GM12878 (cell line): ENCODE measurements at regions of chr4 and their contacts with region 1.

Region 1: GRCh38 chr4:81003597-81004111 is 26.9 kb upstream of the BMP3 start:
- DNase-seq: peak; percentile 75
- ATAC-seq: peak; percentile 98
- H3K4me3 ChIP-seq: no peak overlapping the region
- H3K27ac ChIP-seq: no peak overlapping the region
- H3K4me1 ChIP-seq: peaks cover 6% of the 10 kb centered on the region; the same call in 1 of the 2 replicates
- H3K27me3 ChIP-seq: no peaks in the 10 kb centered on the region
- CTCF ChIP-seq: no peak
- EP300 ChIP-seq: peak; percentile 87 to 96
- POLR2A ChIP-seq: no peak
- RAD21 ChIP-seq: no peak

Region 2: DNA sequence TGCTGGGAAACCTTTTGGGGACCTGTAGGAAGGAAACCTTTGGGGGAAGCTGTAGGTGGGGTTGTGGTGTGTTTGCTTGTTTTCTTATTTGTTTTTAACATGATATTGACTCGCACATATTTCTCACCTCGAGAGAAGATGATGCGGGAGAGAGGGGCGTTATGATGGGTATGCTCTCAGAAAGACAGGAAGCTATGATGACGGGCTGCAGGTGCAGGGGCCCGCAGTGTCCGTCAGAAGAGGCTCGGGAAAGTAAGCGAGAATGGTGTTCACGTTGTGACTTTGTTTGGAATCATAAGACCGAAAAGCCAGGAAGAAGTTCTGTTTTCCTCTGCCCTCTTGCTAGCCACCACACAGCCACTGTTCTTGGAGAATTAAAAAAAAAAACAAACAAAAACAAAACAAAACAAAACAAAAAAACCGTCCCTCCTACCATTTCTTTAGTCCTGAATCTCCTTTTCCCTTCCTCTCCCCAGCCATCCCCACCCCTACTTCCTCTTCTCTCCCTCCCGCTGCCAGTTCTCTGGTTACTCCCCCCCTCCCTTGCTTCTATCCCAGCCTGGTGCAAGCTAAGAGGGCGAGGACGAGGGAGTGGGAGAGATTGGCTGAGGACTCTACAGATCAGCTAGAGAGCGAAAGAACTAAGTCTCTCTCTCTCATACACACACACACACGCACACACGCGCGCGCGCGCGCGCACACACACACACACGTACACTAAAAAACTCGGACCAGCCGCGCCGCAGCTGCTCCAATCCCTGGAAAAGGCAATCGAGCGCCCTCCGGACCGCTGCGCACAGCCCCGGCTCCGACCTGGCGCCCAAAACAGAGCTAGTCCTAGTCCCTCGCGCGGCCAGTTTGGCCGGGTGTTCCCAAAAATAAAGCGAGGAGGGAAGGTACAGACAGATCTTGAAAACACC is 26.7 kb after region 1 on chr4 and contains the start of gene BMP3:
- CTCF ChIA-PET with region 1: interaction called, 4 read pairs
- POLR2A ChIA-PET with region 1: no interaction called
- RAD21 ChIA-PET with region 1: interaction called, 3 read pairs
- SMC1A ChIA-PET with region 1: interaction called, 13 read pairs
- in situ Hi-C with region 1: no loop called
- intact Hi-C with region 1: no loop called
- DNase-seq: no peak
- ATAC-seq: peak; percentile 61
- H3K4me3 ChIP-seq: peak within 1 kb of the TSS; percentile 65
- H3K27ac ChIP-seq: no peak within 1 kb of the TSS
- H3K4me1 ChIP-seq: no peaks in the 10 kb centered on the region
- H3K27me3 ChIP-seq: peaks cover 6 to 7% of the 10 kb centered on the region in 2 experiments; a peak in 3 of 4 replicates
- CTCF ChIP-seq: no peak
- EP300 ChIP-seq: no peak
- POLR2A ChIP-seq: no peak
- RAD21 ChIP-seq: no peak
- polyA plus RNA-seq, gene BMP3: 0.37 to 1.3 TPM

Region 3: GRCh38 chr4:81207828-81208227 is 204.2 kb after region 1 on chr4:
- CTCF ChIA-PET with region 1: no interaction called
- POLR2A ChIA-PET with region 1: no interaction called
- RAD21 ChIA-PET with region 1: no interaction called
- SMC1A ChIA-PET with region 1: no interaction called
- in situ Hi-C with region 1: no loop called
- intact Hi-C with region 1: no loop called
- DNase-seq: no peak
- ATAC-seq: no peak
- H3K4me3 ChIP-seq: no peak overlapping the region
- H3K27ac ChIP-seq: no peak overlapping the region
- H3K4me1 ChIP-seq: no peaks in the 10 kb centered on the region
- H3K27me3 ChIP-seq: no peaks in the 10 kb centered on the region
- CTCF ChIP-seq: no peak
- EP300 ChIP-seq: no peak
- POLR2A ChIP-seq: no peak
- RAD21 ChIP-seq: no peak